ENCODE measurements at regions of chr5 and their contacts with region 1.

Region 1: GRCh38 chr5:148391422-148391821 is 7.7 kb downstream of the FBXO38 start:
- DNase-seq: no peak
- H3K4me3 Mint-ChIP-seq: no peak overlapping the region
- H3K27ac Mint-ChIP-seq: no peak overlapping the region
- H3K4me1 Mint-ChIP-seq: peaks cover 69% of the 10 kb centered on the region
- H3K27me3 Mint-ChIP-seq: no peaks in the 10 kb centered on the region

Region 2: DNA sequence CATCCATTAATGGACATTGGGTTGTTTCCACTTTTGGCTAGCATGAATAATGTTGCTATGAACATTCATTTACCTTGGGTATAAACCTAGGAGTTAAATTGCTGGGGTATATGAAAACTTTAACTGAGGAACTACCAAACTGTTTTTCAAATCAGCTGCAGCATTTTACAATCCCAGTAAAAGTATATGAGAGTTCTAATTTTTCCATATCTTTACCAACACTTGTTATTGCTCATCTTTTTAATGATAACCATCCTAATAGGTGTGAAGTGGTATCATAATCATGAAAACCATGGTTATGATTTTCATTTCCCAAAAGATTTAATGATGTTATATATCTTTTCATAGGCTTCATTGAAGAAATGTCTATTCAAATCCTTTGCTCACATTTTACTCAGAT is 23.1 kb before region 1 on chr5:
- CTCF ChIA-PET with region 1: no interaction called
- intact Hi-C with region 1: no loop called
- DNase-seq: no peak
- H3K4me3 Mint-ChIP-seq: no peak overlapping the region
- H3K27ac Mint-ChIP-seq: no peak overlapping the region
- H3K4me1 Mint-ChIP-seq: no peaks in the 10 kb centered on the region
- H3K27me3 Mint-ChIP-seq: no peaks in the 10 kb centered on the region

Region 3: GRCh38 chr5:148403344-148403743 is 11.9 kb after region 1 on chr5:
- CTCF ChIA-PET with region 1: interaction called, 5 read pairs
- intact Hi-C with region 1: loop called (anchors 1 kb)
- DNase-seq: no peak
- H3K4me3 Mint-ChIP-seq: no peak overlapping the region
- H3K27ac Mint-ChIP-seq: no peak overlapping the region
- H3K4me1 Mint-ChIP-seq: peaks cover 39% of the 10 kb centered on the region
- H3K27me3 Mint-ChIP-seq: no peaks in the 10 kb centered on the region

Region 4: GRCh38 chr5:148437249-148437648 is 45.8 kb after region 1 on chr5:
- CTCF ChIA-PET with region 1: no interaction called
- intact Hi-C with region 1: no loop called
- DNase-seq: no peak
- H3K4me3 Mint-ChIP-seq: peak overlapping the region; percentile 37
- H3K27ac Mint-ChIP-seq: peak overlapping the region; percentile 80
- H3K4me1 Mint-ChIP-seq: peaks cover 5% of the 10 kb centered on the region
- H3K27me3 Mint-ChIP-seq: no peaks in the 10 kb centered on the region